Colonic mucosa (tissue), 4 donors: ENCODE measurements at regions of chr19 and their contacts with region 1.

Region 1: GRCh38 chr19:15091901-15092753 is 10.1 kb downstream of the OR1I1 start:
- DNase-seq: peak; percentile 48
- H3K4me3 ChIP-seq: no peak overlapping the region
- H3K27ac ChIP-seq: no peak overlapping the region
- H3K4me1 ChIP-seq: peaks cover 3% of the 10 kb centered on the region
- H3K27me3 ChIP-seq: no peaks in the 10 kb centered on the region
- CTCF ChIP-seq: peak; percentile 65

Region 2: GRCh38 chr19:14901675-14902260 is 190.4 kb before region 1 on chr19:
- intact Hi-C with region 1: no loop called
- DNase-seq: no peak
- H3K4me3 ChIP-seq: no peak overlapping the region
- H3K27ac ChIP-seq: no peak overlapping the region
- H3K4me1 ChIP-seq: no peaks in the 10 kb centered on the region
- H3K27me3 ChIP-seq: no peaks in the 10 kb centered on the region
- CTCF ChIP-seq: no peak

Region 3: DNA sequence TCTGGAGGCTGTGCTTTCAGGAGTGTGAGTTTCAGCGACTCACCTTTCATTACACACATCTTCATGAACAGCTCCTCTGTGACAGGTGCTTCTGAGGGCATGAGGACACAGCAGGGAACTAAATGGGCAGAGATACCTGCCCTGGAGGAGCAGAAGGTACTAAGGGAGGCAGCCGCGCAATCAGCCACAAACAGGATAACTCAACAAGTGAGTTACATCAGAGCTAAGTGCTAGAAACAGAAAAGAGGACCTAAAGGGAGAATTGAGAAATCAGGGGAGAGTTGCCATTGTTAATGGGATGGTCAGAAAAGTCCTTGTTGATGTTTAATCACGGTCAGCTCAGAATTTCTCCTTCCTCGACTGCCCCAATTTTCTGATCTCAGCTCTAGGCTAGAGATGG is 57.6 kb after region 1 on chr19:
- intact Hi-C with region 1: loop called (anchors 2 kb)
- DNase-seq: no peak
- H3K4me3 ChIP-seq: no peak overlapping the region
- H3K27ac ChIP-seq: no peak overlapping the region
- H3K4me1 ChIP-seq: no peaks in the 10 kb centered on the region
- H3K27me3 ChIP-seq: no peaks in the 10 kb centered on the region
- CTCF ChIP-seq: no peak

Region 4: DNA sequence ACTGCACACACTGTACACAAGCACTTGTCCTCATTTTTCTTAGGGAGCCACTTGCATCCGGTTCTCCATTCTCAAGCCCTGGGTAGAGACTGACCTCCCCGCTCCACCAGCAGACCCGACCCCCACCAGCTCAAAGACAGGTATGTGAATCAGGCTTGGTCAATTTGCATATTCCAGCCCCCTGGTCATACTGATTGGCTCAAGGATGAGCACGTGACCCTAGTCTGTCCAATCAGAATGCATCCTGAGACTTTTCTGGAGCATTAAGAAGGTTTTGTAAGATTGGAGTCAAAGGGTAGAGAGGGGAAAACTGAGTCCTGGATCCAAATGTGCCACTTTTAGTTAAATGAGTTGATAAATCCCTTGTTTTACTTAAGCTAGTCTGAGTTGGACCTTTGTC is 74.6 kb after region 1 on chr19:
- intact Hi-C with region 1: no loop called
- DNase-seq: no peak
- H3K4me3 ChIP-seq: no peak overlapping the region
- H3K27ac ChIP-seq: no peak overlapping the region
- H3K4me1 ChIP-seq: no peaks in the 10 kb centered on the region
- H3K27me3 ChIP-seq: no peaks in the 10 kb centered on the region
- CTCF ChIP-seq: no peak

Region 5: GRCh38 chr19:15177269-15178116 is 85.4 kb after region 1 on chr19:
- intact Hi-C with region 1: no loop called
- DNase-seq: peak; percentile 75
- H3K4me3 ChIP-seq: no peak overlapping the region
- H3K27ac ChIP-seq: no peak overlapping the region
- H3K4me1 ChIP-seq: no peaks in the 10 kb centered on the region
- H3K27me3 ChIP-seq: peaks cover 3% of the 10 kb centered on the region
- CTCF ChIP-seq: peak; percentile 94